ENCODE measurements at regions of chr10 and their contacts with region 1.

Region 1: DNA sequence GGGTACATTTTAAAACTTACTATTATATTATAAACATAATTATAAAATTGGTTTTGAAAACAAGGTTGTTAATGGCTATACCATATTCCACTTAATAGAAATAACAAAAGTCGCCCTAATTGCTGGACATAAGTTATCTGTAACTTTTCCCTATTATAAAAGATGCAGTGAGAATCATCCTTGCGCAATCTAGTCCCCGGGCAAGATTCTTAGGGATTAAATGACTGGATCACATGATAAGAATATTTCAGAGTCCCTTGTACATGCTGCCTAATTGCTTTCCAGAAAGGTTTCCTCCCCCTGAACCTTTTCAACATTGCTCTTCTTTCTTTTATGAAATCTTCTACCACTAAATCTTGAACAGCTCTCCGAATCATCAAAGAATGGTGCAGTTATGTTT is 479.8 kb upstream of the MKI67 start:
- DNase-seq: no peak
- H3K4me3 ChIP-seq: no peak overlapping the region
- H3K27ac ChIP-seq: no peak overlapping the region
- H3K4me1 ChIP-seq: no peaks in the 10 kb centered on the region
- H3K27me3 ChIP-seq: no peaks in the 10 kb centered on the region
- CTCF ChIP-seq: no peak

Region 2: DNA sequence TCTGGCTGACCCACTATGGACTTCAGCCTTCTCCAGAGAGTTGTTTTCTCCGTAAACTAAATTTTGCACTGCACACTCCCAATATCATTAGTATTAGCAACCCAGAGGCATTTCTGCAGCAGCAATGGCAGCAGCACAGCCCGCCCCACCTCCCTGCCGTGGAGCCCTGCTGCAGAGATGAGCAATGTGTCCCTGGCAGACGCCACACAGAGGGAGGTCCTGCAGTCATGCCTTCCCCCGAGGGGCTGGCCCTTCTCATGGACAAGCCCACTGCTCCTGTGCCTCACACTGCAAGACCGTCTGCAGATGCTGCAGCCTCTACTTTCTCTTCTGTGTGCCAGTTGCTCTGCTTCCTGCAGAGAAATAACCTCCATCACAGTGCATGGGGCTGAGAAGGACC is 86.5 kb before region 1 on chr10:
- CTCF ChIA-PET with region 1: no interaction called
- dilution Hi-C with region 1: loop called (anchors 5 kb)
- in situ Hi-C with region 1: no loop called
- intact Hi-C with region 1: no loop called
- DNase-seq: no peak
- H3K4me3 ChIP-seq: no peak overlapping the region
- H3K27ac ChIP-seq: no peak overlapping the region
- H3K4me1 ChIP-seq: no peaks in the 10 kb centered on the region
- H3K27me3 ChIP-seq: no peaks in the 10 kb centered on the region
- CTCF ChIP-seq: no peak

Measured in mammary epithelial cell (primary cell).